ENCODE measurements at regions of chr14 and their contacts with region 1.

Region 1: DNA sequence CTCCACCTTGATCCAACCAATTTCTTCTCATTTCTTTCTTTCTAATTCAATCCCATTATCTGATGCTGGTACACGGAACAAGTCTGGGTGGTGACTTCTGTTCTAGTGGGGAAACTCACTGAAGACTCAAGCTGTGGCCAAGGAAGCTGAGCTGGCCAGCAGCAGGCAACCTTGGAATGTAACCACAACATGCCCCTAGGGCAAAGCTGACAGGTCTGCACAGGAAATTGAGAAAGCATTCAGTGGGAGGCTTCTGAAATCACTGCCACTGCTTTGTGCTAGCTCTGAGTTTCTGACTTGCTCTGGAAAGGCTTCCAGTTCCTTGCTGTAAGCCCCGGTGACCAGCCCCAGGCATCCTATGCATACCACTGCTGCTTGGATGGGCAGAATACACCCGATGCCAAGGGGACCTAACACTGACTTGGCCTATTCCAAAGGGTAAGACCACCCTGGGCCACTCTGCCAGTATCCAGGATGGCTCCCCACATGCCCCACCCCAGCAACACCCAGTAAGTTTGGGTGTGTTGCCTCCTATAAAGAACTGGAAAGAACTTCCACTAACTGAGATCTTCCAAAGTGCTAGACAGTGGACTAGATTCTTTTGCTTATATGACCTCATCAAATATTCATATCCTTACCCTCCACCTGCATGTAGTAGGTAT is 84.5 kb upstream of the CDKN3 start:
- DNase-seq: peak; percentile 99
- H3K4me3 ChIP-seq: peak overlapping the region in 1 of 3 experiments; percentile 14
- H3K27ac ChIP-seq: peak overlapping the region; percentile 78
- H3K4me1 ChIP-seq: peaks cover 34% of the 10 kb centered on the region
- H3K27me3 ChIP-seq: no peaks in the 10 kb centered on the region
- CTCF ChIP-seq: no peak

Region 2: DNA sequence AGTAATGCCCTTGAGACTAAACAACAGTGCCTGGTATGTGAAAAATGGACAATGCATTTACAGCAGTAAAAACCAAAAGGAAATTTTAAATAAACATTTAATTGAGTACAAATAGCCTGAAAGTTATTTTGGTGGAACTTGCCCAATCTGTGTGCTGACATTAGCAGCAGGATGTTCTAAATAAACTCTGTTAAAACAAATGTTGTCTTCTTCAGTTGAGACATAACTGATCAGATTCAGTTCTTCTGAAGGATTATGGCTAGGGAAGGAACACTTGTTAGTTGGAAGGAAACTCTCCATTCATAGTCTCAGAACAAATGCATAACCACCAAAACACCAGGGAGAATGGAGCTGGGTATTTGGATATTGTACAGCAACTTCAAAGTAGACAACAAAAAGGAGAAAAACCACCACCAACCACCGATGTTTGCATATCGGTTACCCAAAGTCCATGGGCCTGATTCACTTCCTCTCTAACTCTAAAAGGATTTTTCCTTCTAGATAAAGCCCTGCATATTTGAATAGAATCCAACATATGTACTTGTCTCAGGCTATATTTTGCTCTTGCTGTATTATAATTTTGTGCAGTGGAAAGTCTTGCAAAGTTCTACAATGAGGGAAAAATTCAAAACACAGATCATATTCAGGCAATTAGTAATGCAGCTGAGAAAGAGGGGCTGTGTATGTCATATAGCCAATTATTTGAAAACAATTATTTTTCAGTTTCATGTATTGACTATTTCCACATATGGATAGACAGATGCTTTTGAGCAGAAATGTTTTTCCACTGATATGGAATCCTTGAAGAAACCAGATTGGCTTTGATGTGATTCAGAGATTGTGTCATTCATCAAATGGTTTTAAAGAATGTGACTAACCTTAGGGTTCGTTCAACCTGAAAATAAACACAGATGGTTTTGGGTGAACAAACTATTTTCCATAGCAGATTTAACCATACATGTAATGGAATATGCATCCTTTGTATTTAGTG is 203.5 kb before region 1 on chr14:
- CTCF ChIA-PET with region 1: no interaction called
- dilution Hi-C with region 1: no loop called
- in situ Hi-C with region 1: no loop called
- intact Hi-C with region 1: loop called (anchors 10 kb)
- DNase-seq: peak; percentile 75
- H3K4me3 ChIP-seq: no peak overlapping the region
- H3K27ac ChIP-seq: peak overlapping the region; percentile 92
- H3K4me1 ChIP-seq: peaks cover 67% of the 10 kb centered on the region
- H3K27me3 ChIP-seq: no peaks in the 10 kb centered on the region
- CTCF ChIP-seq: no peak

Region 3: DNA sequence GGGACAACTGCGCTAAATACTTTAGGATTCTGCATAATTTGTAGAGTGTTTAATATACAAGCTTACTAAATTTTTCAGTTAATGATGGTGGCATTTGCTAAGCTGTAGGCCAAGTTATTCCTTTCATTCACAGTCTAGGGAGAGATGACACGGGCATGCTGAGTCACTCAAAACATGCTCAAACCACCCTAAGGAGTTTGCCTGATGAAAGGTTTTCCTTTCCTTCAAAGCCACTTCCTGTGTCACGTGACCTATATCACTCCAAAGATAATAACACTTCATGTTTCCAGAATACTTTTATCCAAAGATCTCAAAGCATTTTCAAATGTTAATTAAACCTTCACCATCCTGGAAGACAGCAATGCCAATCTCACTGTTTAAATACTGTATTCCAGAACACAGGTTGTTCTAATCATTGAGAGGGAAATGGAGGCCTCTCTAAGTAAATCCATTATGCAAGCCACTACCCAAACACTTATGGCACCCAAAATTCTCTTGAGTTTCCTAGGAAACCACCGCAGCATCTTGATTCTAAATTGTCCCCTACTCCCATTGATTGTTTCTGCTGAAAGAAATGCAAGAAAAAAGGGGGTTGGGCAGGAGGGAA is 122.4 kb before region 1 on chr14:
- CTCF ChIA-PET with region 1: no interaction called
- dilution Hi-C with region 1: no loop called
- in situ Hi-C with region 1: loop called in 1 of 2 experiments (anchors 25 kb)
- intact Hi-C with region 1: loop called (anchors 5 kb)
- DNase-seq: peak; percentile 92
- H3K4me3 ChIP-seq: no peak overlapping the region
- H3K27ac ChIP-seq: peak overlapping the region; percentile 93
- H3K4me1 ChIP-seq: peaks cover 25% of the 10 kb centered on the region
- H3K27me3 ChIP-seq: no peaks in the 10 kb centered on the region
- CTCF ChIP-seq: no peak

Region 4: GRCh38 chr14:54211551-54212308 is 100.5 kb before region 1 on chr14:
- CTCF ChIA-PET with region 1: no interaction called
- dilution Hi-C with region 1: no loop called
- in situ Hi-C with region 1: no loop called
- intact Hi-C with region 1: loop called (anchors 1 kb)
- DNase-seq: peak; percentile 79
- H3K4me3 ChIP-seq: peak overlapping the region in 2 of 3 experiments; percentile 2 to 22
- H3K27ac ChIP-seq: peak overlapping the region; percentile 99
- H3K4me1 ChIP-seq: peaks cover 58% of the 10 kb centered on the region
- H3K27me3 ChIP-seq: no peaks in the 10 kb centered on the region
- CTCF ChIP-seq: no peak

Region 5: DNA sequence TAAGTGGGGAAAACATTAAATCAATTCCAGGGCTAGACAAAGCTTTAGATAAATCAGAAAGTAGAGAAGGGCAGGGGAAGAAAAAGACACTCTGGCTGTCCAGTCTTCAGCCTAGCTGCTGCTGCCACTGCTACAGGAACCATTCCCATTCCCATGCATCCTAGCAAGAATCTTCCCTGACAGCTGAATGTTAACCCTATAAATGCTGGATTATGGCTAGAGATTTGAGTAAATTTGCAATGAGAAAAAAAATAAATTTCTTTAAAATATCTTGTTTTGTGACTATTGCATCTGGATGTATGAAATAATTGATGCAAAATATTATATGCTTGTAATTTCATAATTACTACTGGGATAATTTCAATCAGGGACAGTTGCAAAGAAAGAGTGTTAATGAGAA is 69.5 kb after region 1 on chr14:
- CTCF ChIA-PET with region 1: no interaction called
- dilution Hi-C with region 1: no loop called
- in situ Hi-C with region 1: no loop called
- intact Hi-C with region 1: no loop called
- DNase-seq: no peak
- H3K4me3 ChIP-seq: no peak overlapping the region
- H3K27ac ChIP-seq: no peak overlapping the region
- H3K4me1 ChIP-seq: no peaks in the 10 kb centered on the region
- H3K27me3 ChIP-seq: peaks cover 2% of the 10 kb centered on the region
- CTCF ChIP-seq: no peak

Measured in mammary epithelial cell (primary cell).